ENCODE measurements at regions of chrX and their contacts with region 1.

Region 1: GRCh38 chrX:103640401-103641155 is 11.8 kb downstream of the TCEAL1 start:
- DNase-seq: no peak
- H3K4me3 ChIP-seq: no peak overlapping the region
- H3K4me3 Mint-ChIP-seq: no peak overlapping the region
- H3K27ac ChIP-seq: no peak overlapping the region
- H3K27ac Mint-ChIP-seq: no peak overlapping the region
- H3K4me1 ChIP-seq: no peaks in the 10 kb centered on the region
- H3K4me1 Mint-ChIP-seq: no peaks in the 10 kb centered on the region
- H3K27me3 ChIP-seq: no peaks in the 10 kb centered on the region
- H3K27me3 Mint-ChIP-seq: peaks cover 1 to 11% (median 2%) of the 10 kb centered on the region in 3 donors
- CTCF ChIP-seq: no peak

Region 2: GRCh38 chrX:103607364-103608305 is 32.9 kb before region 1 on chrX and contains the start of gene TCEAL3:
- intact Hi-C with region 1: no loop called
- DNase-seq: peak in 2 of 3 donors; percentile 17 to 47
- H3K4me3 ChIP-seq: peak within 1 kb of the TSS; percentile 75 to 77 (median 76)
- H3K4me3 Mint-ChIP-seq: peak within 1 kb of the TSS; percentile 87 to 90
- H3K27ac ChIP-seq: peak within 1 kb of the TSS in 1 of 2 donors; percentile 63
- H3K27ac Mint-ChIP-seq: peak within 1 kb of the TSS in 6 of 7 donors; percentile 60 to 90 (median 80)
- H3K4me1 ChIP-seq: peaks cover 0 to 7% of the 10 kb centered on the region in 2 donors
- H3K4me1 Mint-ChIP-seq: peaks cover 7% of the 10 kb centered on the region
- H3K27me3 ChIP-seq: peaks cover 0 to 5% of the 10 kb centered on the region in 2 donors
- H3K27me3 Mint-ChIP-seq: peaks cover 0 to 15% (median 11%) of the 10 kb centered on the region in 3 donors
- CTCF ChIP-seq: no peak
- polyA plus RNA-seq, gene TCEAL3: 1.8 to 3.7 (median 2.1) TPM

Region 3: GRCh38 chrX:103628386-103629317 is 11.9 kb before region 1 on chrX and contains the start of gene TCEAL1:
- intact Hi-C with region 1: loop called in 1 of 2 experiments (anchors 2 kb)
- DNase-seq: peak in 2 of 3 donors; percentile 9 to 21
- H3K4me3 ChIP-seq: peak within 1 kb of the TSS; percentile 75 to 82 (median 77)
- H3K4me3 Mint-ChIP-seq: peak within 1 kb of the TSS; percentile 90 to 94
- H3K27ac ChIP-seq: peak within 1 kb of the TSS; percentile 44 to 58
- H3K27ac Mint-ChIP-seq: peak within 1 kb of the TSS; percentile 67 to 88 (median 77)
- H3K4me1 ChIP-seq: peaks cover 0 to 5% of the 10 kb centered on the region in 2 donors
- H3K4me1 Mint-ChIP-seq: peaks cover 14% of the 10 kb centered on the region
- H3K27me3 ChIP-seq: no peaks in the 10 kb centered on the region
- H3K27me3 Mint-ChIP-seq: peaks cover 0 to 5% (median 0%) of the 10 kb centered on the region in 3 donors
- CTCF ChIP-seq: no peak
- polyA plus RNA-seq, gene TCEAL1: 5.5 to 11.4 (median 5.8) TPM

Region 4: GRCh38 chrX:104411800-104412199 is 771.2 kb after region 1 on chrX:
- intact Hi-C with region 1: no loop called
- DNase-seq: no peak
- H3K4me3 ChIP-seq: no peak overlapping the region
- H3K4me3 Mint-ChIP-seq: no peak overlapping the region
- H3K27ac ChIP-seq: no peak overlapping the region
- H3K27ac Mint-ChIP-seq: no peak overlapping the region
- H3K4me1 ChIP-seq: no peaks in the 10 kb centered on the region
- H3K4me1 Mint-ChIP-seq: no peaks in the 10 kb centered on the region
- H3K27me3 ChIP-seq: no peaks in the 10 kb centered on the region
- H3K27me3 Mint-ChIP-seq: peaks cover 1 to 3% (median 2%) of the 10 kb centered on the region in 3 donors
- CTCF ChIP-seq: no peak

Measured in CD14-positive monocyte (primary cell).